Sciatic nerve (tissue), 2 donors: ENCODE measurements at regions of chr12 and their contacts with region 1.

Region 1: GRCh38 chr12:50326636-50327284 is 43.4 kb upstream of the LIMA1 start:
- DNase-seq: no peak
- ATAC-seq: peak; percentile 52

Region 2: DNA sequence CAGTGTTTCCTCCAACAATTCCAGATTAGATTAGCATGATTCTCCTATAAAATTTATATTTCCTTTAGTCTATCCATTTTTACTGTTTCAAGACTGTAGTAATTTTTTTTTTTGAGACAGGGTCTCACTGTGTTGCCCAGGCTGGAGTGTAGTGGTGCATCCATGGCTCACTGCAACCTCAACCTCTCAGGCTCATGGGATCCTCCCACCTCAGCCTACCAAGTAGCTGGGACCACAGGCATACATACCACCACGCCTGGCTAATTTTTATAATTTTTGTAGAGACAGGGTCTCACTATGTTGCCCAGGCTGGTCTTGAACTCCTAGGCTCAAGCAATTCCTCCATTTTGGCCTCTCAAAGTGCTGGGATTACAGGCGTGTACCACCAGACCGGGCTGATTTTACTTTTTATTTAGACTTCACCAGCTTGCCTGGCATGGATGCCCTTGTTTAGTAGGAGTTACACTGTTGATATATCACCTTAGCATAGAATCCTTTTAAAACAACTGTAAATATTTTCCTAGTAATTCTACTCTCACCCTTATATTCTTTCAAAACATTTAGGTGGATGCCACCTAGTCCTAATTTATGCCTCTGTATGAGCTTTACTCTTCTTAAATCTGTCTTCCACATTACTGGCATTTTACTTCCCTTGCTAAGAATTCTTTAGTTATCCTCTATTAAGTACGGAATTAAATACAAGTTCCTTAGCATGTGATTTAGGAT is 12.3 kb after region 1 on chr12:
- intact Hi-C with region 1: loop called (anchors 1 kb)
- DNase-seq: no peak
- ATAC-seq: no peak